Activated T-helper 1 cell treated with anti-CD3 and anti-CD28 coated beads, Interleukin-12 subunit alpha, Interleukin-12 subunit beta, Interleukin-2, Interleukin-4 antibody, amounts not matched to agents 30 ng/mL and 10 ng/mL and 1 ng/mL, durations not matched to agents 14 hours and 24 hours and 36 hours (primary cell): ENCODE measurements at regions of chr2 and their contacts with region 1.

Region 1: GRCh38 chr2:8049851-8050571 is 631.8 kb upstream of the ID2 start:
- DNase-seq: peak; percentile 52
- H3K4me3 Mint-ChIP-seq: peak overlapping the region; percentile 43
- H3K27ac Mint-ChIP-seq: peak overlapping the region; percentile 93
- H3K4me1 Mint-ChIP-seq: peaks cover 48% of the 10 kb centered on the region
- H3K27me3 Mint-ChIP-seq: no peaks in the 10 kb centered on the region

Region 2: DNA sequence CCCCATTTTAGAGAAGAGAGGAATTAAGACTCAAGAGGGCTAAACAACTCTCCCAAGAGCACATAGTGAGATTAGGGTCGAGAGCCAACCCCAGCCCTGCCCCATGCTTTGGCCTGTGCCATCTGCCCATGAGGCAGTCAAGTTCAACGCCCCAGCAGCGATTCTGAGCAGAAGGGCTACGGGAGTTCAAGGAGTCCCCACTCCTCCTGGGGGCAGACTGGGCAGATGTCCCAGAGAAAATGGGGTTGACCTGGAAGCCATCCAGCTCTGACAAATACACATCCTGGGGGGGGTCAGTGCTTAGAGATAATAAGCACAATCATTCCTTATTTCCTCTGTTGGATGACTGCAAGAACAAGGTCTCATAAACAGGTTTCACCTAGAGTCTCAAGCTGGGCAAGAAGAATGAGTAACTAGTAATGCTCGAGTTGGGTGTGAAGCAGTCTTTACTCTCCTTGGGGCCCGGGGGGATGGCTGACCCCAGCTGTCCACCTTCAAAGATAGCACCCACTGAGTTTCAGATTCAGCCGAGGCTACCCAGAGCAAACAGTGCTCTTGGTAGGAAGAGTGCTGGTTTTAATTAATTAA is 416.4 kb before region 1 on chr2:
- intact Hi-C with region 1: no loop called
- DNase-seq: no peak
- H3K4me3 Mint-ChIP-seq: no peak overlapping the region
- H3K27ac Mint-ChIP-seq: no peak overlapping the region
- H3K4me1 Mint-ChIP-seq: no peaks in the 10 kb centered on the region
- H3K27me3 Mint-ChIP-seq: no peaks in the 10 kb centered on the region

Region 3: DNA sequence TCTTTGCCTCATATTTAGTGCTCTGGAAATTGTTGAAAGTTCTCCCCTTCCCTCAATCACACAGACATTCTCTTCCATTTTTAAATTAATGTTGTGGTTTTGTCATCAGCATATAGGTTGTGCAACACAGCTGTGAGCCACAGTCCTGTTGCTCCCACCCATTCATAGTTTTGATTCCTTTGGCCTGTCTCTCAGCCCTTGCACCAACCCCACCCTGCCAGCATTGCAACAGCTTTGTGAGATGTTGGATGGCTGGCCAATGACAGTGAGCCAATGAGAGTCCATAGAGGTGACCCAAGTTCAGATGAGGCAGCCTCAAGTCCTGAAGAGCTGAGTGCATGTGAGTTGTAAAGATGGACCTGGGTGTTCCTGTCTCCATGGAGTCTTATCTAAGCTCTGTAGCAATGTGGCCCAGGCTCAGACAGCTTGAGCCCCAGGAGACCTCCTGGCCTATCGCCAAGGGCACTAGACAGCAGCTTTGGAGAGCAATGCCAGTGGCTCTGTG is 357.3 kb before region 1 on chr2:
- intact Hi-C with region 1: loop called (anchors 10 kb)
- DNase-seq: no peak
- H3K4me3 Mint-ChIP-seq: peak overlapping the region; percentile 48
- H3K27ac Mint-ChIP-seq: peak overlapping the region; percentile 94
- H3K4me1 Mint-ChIP-seq: peaks cover 51% of the 10 kb centered on the region
- H3K27me3 Mint-ChIP-seq: no peaks in the 10 kb centered on the region

Region 4: DNA sequence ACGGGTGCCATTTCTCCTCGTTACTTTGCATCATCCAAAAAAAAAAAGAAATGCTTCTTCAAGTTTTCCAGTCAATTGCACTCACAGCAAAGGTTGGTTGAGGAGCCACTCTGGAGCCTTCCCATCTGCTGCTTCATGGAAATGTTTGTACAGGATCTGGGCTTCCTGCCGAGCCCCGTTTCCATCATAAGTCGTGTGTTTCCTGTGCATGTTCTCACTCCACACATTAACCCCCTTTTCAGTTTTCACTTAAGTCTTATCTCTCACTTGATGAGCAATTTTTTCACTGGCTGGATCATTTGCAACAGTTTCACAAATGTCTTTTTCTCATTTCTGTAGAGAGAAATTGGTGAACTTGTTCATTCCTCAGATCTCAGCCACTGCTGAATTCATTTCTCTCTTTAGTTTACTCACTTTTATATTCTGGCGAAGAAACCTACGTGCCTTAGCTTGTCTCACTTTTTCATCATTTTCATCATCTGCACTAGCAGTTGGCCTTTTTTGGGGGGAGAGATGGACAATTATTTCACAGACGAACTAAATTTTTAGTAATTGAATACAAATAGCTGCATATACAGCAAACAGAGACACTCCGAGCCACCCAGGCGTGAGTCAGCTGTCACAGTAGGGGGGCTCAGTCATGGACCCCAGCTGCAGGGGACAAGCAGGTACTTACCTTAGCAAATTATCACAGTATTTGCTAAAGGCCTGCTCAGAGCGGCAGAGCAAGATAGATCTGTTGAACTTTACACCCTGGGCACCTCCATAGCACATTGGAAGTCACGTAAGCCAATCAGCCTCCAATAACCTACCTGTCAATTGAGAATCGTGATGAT is 119.0 kb before region 1 on chr2:
- intact Hi-C with region 1: loop called (anchors 1 kb)
- DNase-seq: no peak
- H3K4me3 Mint-ChIP-seq: no peak overlapping the region
- H3K27ac Mint-ChIP-seq: peak overlapping the region; percentile 81
- H3K4me1 Mint-ChIP-seq: peaks cover 11% of the 10 kb centered on the region
- H3K27me3 Mint-ChIP-seq: no peaks in the 10 kb centered on the region

Region 5: DNA sequence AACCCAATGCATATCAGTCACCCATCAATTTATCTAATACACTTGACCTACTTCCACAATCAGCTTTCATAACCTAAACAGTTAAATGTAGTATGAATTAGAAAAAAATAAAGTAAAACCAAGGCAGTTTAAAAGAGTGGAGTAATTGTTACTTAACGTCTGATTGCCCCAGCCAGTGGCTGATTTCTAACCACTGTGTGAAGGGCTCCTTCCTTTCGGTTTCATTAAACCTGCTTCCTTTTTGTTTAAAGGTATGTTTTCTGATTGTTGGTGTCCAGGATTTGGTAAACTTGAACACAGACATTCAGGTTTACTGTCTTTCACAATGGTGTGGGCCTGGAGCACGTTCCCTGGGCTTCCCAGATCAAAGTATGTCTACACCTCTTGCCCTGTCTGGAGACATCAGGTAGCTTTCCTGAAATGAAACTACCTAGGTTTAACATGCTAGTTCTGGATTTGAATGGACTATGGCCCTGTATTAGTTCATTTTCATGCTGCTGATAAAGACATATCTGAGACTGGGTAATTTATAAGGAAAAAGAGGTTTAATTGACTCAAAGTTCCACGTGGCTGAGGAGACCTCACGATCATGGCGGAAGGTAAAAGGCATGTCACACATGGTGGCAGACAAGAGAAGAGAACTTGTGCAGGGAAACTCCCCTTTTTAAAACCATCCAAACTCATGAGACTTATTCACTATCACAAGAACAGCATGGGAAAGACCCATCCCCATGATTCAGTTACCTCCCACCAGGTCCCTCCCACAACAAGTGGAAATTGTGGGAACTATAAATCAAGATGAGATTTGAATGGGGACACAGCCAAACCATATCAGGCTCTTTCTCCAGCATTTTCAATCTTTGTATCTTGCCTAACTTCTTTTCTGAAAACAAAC is 26.7 kb after region 1 on chr2:
- intact Hi-C with region 1: loop called (anchors 2 kb)
- DNase-seq: no peak
- H3K4me3 Mint-ChIP-seq: no peak overlapping the region
- H3K27ac Mint-ChIP-seq: peak overlapping the region; percentile 27
- H3K4me1 Mint-ChIP-seq: peaks cover 18% of the 10 kb centered on the region
- H3K27me3 Mint-ChIP-seq: no peaks in the 10 kb centered on the region

Region 6: DNA sequence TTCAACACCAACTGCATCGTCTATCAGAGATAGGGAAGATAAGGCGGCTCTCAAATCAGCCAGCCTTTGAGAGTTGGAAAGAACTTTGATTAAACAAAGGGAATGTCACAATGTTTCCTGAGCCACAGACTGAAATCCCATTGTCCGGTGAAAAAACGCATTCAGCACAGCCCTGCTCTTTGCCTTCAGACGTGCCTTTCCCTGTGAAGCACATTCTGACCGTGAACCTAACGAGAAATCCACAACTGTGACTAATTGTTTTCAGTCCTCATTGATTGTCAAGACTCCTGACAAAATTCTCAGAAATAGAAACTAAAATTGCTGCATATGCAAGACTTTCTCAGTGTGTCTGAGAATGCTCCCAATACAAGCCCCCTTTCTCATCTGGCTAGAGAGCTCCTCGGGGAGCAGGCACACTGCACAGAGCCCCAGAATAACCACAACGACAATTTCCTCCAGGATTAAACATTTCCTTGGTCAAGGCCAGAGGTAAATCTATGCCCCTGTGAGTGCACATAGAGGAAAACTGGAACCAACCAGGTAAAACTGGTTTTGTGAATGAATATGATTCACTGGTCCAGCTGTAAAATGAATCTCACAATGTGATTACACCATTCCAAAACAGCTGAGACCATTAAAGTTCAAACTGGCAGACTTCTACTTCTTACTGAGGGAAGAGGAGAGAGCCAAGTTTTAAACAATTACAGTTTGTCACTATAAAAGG is 69.9 kb after region 1 on chr2:
- intact Hi-C with region 1: no loop called
- DNase-seq: no peak
- H3K4me3 Mint-ChIP-seq: peak overlapping the region; percentile 30
- H3K27ac Mint-ChIP-seq: peak overlapping the region; percentile 77
- H3K4me1 Mint-ChIP-seq: peaks cover 30% of the 10 kb centered on the region
- H3K27me3 Mint-ChIP-seq: peaks cover 4% of the 10 kb centered on the region

Region 7: GRCh38 chr2:8310557-8311455 is 260.8 kb after region 1 on chr2:
- intact Hi-C with region 1: loop called (anchors 2 kb)
- DNase-seq: peak; percentile 51
- H3K4me3 Mint-ChIP-seq: peak overlapping the region; percentile 8
- H3K27ac Mint-ChIP-seq: peak overlapping the region; percentile 83
- H3K4me1 Mint-ChIP-seq: peaks cover 78% of the 10 kb centered on the region
- H3K27me3 Mint-ChIP-seq: peaks cover 2% of the 10 kb centered on the region